Activated B cell treated with CpG ODN at 0.5 μM for 24 hours (primary cell): ENCODE measurements at regions of chr7 and their contacts with region 1.

Region 1: GRCh38 chr7:43582503-43583423 is at the start of gene STK17A:
- DNase-seq: peak; percentile 94
- ATAC-seq: peak; percentile 84
- H3K4me3 Mint-ChIP-seq: peak within 1 kb of the TSS; percentile 92
- H3K27ac Mint-ChIP-seq: peak within 1 kb of the TSS; percentile 97
- H3K4me1 Mint-ChIP-seq: peaks cover 41% of the 10 kb centered on the region
- H3K27me3 Mint-ChIP-seq: no peaks in the 10 kb centered on the region
- CTCF ChIP-seq: peak; percentile 44
- total RNA-seq, gene STK17A: 67.1 and 68.6 TPM in 2 replicates

Region 2: GRCh38 chr7:41881331-41882130 is 1701.2 kb before region 1 on chr7:
- CTCF ChIA-PET with region 1: no interaction called
- POLR2A ChIA-PET with region 1: no interaction called
- intact Hi-C with region 1: loop called (anchors 5 kb)
- DNase-seq: peak; percentile 75
- ATAC-seq: peak; percentile 88
- H3K4me3 Mint-ChIP-seq: peak overlapping the region; percentile 80
- H3K27ac Mint-ChIP-seq: peak overlapping the region; percentile 91
- H3K4me1 Mint-ChIP-seq: peaks cover 76% of the 10 kb centered on the region
- H3K27me3 Mint-ChIP-seq: no peaks in the 10 kb centered on the region
- CTCF ChIP-seq: no peak

Region 3: DNA sequence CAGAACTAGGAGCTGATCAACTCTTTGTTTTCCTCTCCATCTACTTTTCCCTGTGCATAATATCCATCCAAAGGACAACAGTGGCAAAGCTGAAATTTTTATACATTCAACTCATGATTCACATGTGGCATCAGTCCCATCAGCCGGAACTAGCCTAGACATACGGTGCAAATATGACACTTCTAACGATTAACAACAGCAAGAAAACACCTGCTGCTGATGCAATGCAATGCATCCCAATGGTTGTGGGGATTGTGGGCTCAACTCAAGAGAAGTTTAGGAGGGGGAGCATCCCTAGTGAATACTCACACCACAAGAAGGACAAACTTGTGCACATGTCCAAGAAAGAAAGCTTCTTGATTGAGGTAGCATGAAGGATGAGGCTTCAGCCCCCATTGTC is 20.4 kb before region 1 on chr7:
- CTCF ChIA-PET with region 1: no interaction called
- POLR2A ChIA-PET with region 1: no interaction called
- intact Hi-C with region 1: no loop called
- DNase-seq: no peak
- ATAC-seq: no peak
- H3K4me3 Mint-ChIP-seq: no peak overlapping the region
- H3K27ac Mint-ChIP-seq: no peak overlapping the region
- H3K4me1 Mint-ChIP-seq: no peaks in the 10 kb centered on the region
- H3K27me3 Mint-ChIP-seq: peaks cover 23% of the 10 kb centered on the region
- CTCF ChIP-seq: no peak

Region 4: GRCh38 chr7:43612599-43613589 is 30.1 kb after region 1 on chr7:
- CTCF ChIA-PET with region 1: interaction called, 40 read pairs
- POLR2A ChIA-PET with region 1: interaction called, 41 read pairs
- intact Hi-C with region 1: no loop called
- DNase-seq: no peak
- ATAC-seq: peak; percentile 58
- H3K4me3 Mint-ChIP-seq: peak overlapping the region; percentile 49
- H3K27ac Mint-ChIP-seq: peak overlapping the region; percentile 86
- H3K4me1 Mint-ChIP-seq: peaks cover 60% of the 10 kb centered on the region
- H3K27me3 Mint-ChIP-seq: no peaks in the 10 kb centered on the region
- CTCF ChIP-seq: no peak

Region 5: GRCh38 chr7:43639858-43640491 is 57.2 kb after region 1 on chr7:
- CTCF ChIA-PET with region 1: interaction called, 36 read pairs
- POLR2A ChIA-PET with region 1: interaction called, 342 read pairs
- intact Hi-C with region 1: no loop called
- DNase-seq: no peak
- ATAC-seq: no peak
- H3K4me3 Mint-ChIP-seq: no peak overlapping the region
- H3K27ac Mint-ChIP-seq: peak overlapping the region; percentile 65
- H3K4me1 Mint-ChIP-seq: peaks cover 76% of the 10 kb centered on the region
- H3K27me3 Mint-ChIP-seq: no peaks in the 10 kb centered on the region
- CTCF ChIP-seq: no peak

Region 6: DNA sequence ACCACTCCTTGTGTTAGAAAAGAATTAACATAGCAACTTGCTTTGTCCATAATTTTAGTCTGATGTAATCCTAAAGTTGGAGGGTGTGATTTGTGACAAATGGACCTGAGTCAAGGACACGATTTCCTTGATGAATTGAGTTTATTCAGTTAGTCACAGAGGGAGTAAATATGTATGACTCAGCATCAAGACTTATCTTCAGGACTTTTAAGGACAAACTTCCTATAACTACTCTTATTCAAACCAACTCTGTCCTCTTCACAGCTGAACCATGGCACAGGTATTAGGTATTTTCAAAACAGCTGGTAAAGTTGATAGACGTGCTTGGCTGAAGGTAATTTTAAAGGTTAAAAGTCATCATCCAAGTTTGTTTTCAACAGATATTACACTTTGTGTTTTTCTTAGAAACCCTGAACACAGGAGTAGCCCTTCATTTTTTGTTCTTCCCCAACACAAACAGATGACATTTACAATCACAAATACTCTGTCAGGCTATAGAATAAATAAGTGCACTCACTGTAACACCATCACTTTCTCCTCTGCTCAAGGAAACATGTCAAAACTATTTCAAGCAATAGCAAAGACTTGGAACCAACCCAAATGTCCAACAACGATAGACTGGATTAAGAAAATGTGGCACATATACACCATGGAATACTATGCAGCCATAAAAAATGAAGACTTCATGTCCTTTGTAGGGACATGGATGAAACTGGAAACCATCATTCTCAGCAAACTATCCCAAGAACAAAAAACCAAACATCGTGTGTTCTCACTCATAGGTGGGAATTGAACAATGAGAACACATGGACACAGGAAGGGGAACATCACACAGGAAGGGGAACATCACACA is 92.0 kb after region 1 on chr7:
- CTCF ChIA-PET with region 1: interaction called, 15 read pairs
- POLR2A ChIA-PET with region 1: interaction called, 21 read pairs
- intact Hi-C with region 1: no loop called
- DNase-seq: no peak
- ATAC-seq: no peak
- H3K4me3 Mint-ChIP-seq: no peak overlapping the region
- H3K27ac Mint-ChIP-seq: peak overlapping the region; percentile 30
- H3K4me1 Mint-ChIP-seq: peaks cover 72% of the 10 kb centered on the region
- H3K27me3 Mint-ChIP-seq: no peaks in the 10 kb centered on the region
- CTCF ChIP-seq: no peak

Region 7: GRCh38 chr7:43721193-43721806 is 138.5 kb after region 1 on chr7:
- CTCF ChIA-PET with region 1: interaction called, 92 read pairs
- POLR2A ChIA-PET with region 1: interaction called, 24 read pairs
- intact Hi-C with region 1: loop called (anchors 1 kb)
- DNase-seq: no peak
- ATAC-seq: peak; percentile 25
- H3K4me3 Mint-ChIP-seq: no peak overlapping the region
- H3K27ac Mint-ChIP-seq: no peak overlapping the region
- H3K4me1 Mint-ChIP-seq: peaks cover 16% of the 10 kb centered on the region
- H3K27me3 Mint-ChIP-seq: no peaks in the 10 kb centered on the region
- CTCF ChIP-seq: peak; percentile 61

Region 8: DNA sequence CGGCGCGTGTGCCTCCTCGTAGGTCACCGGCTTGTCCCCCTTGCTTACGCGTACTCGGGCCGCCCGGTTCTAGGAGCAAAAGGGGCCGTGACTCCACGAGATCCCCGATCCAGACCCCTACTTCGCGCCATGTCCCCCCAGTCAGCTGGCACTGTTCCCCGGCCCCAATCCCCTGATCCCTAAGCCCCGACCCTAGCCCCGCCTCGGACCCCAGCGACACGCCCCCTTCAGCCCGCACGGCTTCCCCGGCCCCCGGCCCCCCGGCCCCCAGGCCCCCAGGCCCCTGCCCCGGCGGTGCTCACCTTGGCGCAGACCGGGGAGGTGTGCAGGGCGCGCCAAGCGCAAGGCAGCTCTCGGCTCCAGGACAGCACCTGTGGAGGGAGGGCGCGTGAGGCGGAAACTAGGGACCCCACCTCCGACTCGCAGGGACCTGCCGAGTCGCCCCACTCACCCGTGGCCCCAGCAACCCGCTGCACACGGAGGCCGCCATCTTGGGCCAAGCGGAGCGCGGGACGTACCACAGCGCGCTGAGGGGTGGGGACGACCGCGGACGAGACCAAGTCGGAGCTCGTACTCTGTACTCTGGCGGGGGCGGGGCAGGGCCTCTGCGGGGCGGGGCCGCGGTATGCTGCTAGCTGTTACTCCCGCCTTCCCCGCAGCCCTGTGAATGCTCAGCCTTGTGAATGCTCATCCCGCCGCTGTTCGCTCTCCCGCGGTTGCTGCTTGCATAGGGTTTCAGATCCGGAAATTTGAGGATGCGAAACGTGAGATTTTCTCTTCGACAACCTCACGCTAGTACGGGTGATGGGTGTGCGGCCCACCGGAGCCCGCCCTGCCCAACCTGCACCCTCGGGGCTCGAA is 286.5 kb after region 1 on chr7 and contains the start of gene MRPS24:
- CTCF ChIA-PET with region 1: interaction called, 7 read pairs
- POLR2A ChIA-PET with region 1: interaction called, 5 read pairs
- intact Hi-C with region 1: loop called (anchors 1 kb)
- DNase-seq: peak; percentile 85
- ATAC-seq: peak; percentile 98
- H3K4me3 Mint-ChIP-seq: peak within 1 kb of the TSS; percentile 93
- H3K27ac Mint-ChIP-seq: peak within 1 kb of the TSS; percentile 89
- H3K4me1 Mint-ChIP-seq: peaks cover 21% of the 10 kb centered on the region
- H3K27me3 Mint-ChIP-seq: no peaks in the 10 kb centered on the region
- CTCF ChIP-seq: no peak
- total RNA-seq, gene MRPS24: 73.1 and 78.1 TPM in 2 replicates